ENCODE measurements at regions of chr15 and their contacts with region 1.

Region 1: DNA sequence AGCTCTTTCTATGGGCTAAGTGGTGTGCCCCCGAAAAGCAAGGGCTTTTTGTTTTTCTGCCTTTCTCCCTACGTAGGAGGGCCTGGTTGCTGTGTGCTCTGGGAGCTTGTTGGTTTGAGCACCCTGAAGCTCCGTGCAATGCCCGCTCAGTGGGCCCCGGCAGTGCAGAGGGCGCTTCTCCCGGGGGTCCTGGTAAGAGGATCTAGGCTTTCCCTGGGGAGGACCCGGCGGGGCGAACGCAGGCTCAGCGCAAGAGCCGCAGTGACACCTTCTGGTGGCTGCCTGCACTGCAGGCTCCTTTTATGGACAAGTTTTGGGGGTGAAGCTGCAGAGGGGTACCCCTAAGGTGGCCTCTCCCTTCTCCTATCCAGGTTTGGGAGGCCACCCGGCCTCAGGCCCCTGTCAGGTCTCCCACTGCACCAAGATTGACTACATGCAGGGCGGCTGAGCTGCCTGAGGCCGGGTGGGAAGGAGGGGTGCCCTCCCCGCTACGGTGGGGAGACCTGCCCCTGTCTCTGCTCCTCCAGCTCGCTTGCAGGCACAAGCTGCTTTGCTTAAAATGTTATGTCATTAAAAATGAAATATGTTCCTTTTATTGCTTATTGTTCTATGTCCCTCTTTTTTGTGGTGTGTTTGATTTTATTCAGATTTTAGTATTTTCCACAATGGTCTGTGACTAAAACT is 387.9 kb downstream of the GABRG3 start:
- DNase-seq: no peak
- H3K4me3 ChIP-seq: no peak overlapping the region
- H3K27ac ChIP-seq: no peak overlapping the region
- H3K4me1 ChIP-seq: no peaks in the 10 kb centered on the region
- CTCF ChIP-seq: peak; percentile 65

Region 2: GRCh38 chr15:27059610-27060202 is 299.2 kb before region 1 on chr15:
- CTCF ChIA-PET with region 1: no interaction called
- POLR2A ChIA-PET with region 1: no interaction called
- intact Hi-C with region 1: loop called (anchors 5 kb)
- DNase-seq: peak; percentile 44
- H3K4me3 ChIP-seq: no peak overlapping the region
- H3K27ac ChIP-seq: no peak overlapping the region
- H3K4me1 ChIP-seq: no peaks in the 10 kb centered on the region
- CTCF ChIP-seq: peak; percentile 85

Measured in OCI-LY7 (cell line).